ENCODE measurements at regions of chr19 and their contacts with region 1.

Region 1: GRCh38 chr19:51259348-51260245 is 8.7 kb downstream of the SIGLECL1 start:
- H3K4me3 Mint-ChIP-seq: no peak overlapping the region
- H3K27ac Mint-ChIP-seq: no peak overlapping the region
- H3K4me1 Mint-ChIP-seq: peaks cover 29% of the 10 kb centered on the region
- H3K27me3 Mint-ChIP-seq: peaks cover 3% of the 10 kb centered on the region

Region 2: DNA sequence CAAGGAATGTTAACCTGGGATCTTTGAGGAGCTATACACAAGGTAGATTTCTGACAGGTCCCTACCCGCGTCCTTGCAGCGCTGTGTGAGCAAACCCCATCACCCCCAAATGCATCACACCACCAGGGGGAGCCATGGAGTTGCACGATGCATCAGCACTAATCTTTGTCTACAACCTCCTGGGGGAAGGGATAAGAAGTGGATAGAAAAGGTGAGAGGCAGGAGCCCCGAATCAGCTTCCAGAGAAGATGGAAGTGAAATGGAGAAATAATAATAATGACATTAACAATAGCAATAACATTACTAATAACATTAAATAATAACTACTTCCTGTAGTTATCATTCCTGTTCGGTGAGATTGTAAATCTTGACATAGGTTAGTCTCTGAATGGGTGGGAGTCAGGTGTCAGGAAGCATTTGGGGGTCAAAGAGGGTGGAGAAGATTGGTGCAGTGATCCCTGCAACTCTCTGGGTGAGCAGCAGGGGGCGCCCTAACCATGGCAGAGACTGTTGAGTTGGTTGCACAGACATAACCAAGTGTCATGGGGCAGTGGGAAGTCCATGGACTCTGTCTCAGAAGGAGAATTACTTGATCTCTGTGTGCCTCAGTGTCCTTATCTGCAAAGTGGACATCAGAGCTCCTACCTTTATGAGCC is 101.0 kb before region 1 on chr19:
- intact Hi-C with region 1: loop called (anchors 1 kb)
- H3K4me3 Mint-ChIP-seq: no peak overlapping the region
- H3K27ac Mint-ChIP-seq: peak overlapping the region; percentile 67
- H3K4me1 Mint-ChIP-seq: peaks cover 23% of the 10 kb centered on the region
- H3K27me3 Mint-ChIP-seq: no peaks in the 10 kb centered on the region

Region 3: DNA sequence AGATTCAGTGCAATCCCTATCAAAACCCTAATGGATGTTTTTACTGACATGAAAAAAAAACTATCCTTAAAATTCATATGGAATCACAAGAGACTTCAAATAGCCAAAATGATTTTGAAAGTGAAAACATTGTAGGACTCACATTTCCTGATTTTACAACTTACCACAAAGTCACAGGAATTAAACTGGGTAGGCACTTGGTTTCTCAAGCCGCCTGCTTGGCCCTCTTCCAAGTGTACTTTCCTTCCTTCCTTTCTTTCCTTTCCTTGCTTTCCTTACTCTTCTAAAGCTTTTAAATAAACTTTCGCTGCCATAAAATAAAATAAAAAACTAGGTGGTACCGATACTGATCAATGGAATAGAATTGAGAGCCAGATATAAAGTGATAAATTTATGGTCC is 55.7 kb before region 1 on chr19:
- intact Hi-C with region 1: loop called (anchors 10 kb)
- H3K4me3 Mint-ChIP-seq: no peak overlapping the region
- H3K27ac Mint-ChIP-seq: no peak overlapping the region
- H3K4me1 Mint-ChIP-seq: peaks cover 32% of the 10 kb centered on the region
- H3K27me3 Mint-ChIP-seq: peaks cover 14% of the 10 kb centered on the region

Measured in dendritic cell treated with granulocyte-macrophage colony-stimulating factor and Interleukin-4, amounts not matched to agents 40 ng/mL and 50 ng/mL, for 4 days (primary cell).